CD8-positive, alpha-beta T cell (primary cell): ENCODE measurements at regions of chrX and their contacts with region 1.

Region 1: DNA sequence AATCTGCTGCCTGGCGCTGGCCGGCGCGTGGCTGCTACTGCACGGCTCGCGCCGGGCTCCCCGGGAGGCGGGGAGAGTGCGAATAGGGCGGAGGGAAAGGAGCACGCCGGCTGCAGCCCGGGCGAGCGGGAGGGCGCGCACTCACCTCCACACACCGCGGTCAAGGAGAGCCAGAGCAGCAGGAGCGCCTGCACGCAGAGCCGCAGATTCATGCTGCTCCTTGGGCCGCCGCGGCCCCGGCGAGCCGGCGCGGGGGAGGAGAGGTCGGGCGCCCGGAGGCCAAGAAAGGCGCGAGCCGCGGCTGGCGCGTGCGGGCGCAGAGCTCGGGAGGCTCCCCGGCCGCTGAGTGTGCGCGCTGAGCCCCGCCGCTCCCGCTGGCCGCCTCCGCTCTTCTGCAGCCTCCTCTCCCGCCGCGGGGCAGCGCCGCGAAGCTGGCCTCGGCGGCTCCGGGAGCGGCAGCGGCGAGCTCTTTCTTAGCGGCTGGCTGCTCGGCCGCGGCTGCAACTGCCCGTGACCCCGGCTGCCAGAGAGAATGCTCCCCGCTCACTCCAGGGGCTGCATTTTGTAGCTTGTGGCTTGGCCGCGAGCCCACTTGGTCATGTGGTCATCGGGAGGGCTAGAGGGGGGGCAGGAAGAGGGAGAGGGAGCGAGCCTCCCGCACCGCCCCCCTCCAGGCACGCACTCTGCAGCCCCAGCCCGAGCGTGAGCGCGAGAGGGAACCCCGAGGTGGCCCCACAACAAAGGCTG is at the start of gene APLN:
- DNase-seq: peak in 2 of 9 experiments; percentile 29 to 33
- ATAC-seq: peak; percentile 52
- H3K4me3 ChIP-seq: peak within 1 kb of the TSS; percentile 15 to 26
- H3K4me3 Mint-ChIP-seq: peak within 1 kb of the TSS; percentile 68
- H3K27ac ChIP-seq: no peak within 1 kb of the TSS
- H3K27ac Mint-ChIP-seq: no peak within 1 kb of the TSS
- H3K4me1 ChIP-seq: peaks cover 10% of the 10 kb centered on the region
- H3K4me1 Mint-ChIP-seq: peaks cover 7% of the 10 kb centered on the region
- H3K27me3 ChIP-seq: peaks cover 0 to 3% of the 10 kb centered on the region in 2 experiments
- H3K27me3 Mint-ChIP-seq: peaks cover 12% of the 10 kb centered on the region
- CTCF ChIP-seq: no peak
- total RNA-seq, gene APLN: not detected

Region 2: GRCh38 chrX:129695535-129695934 is 40.9 kb after region 1 on chrX:
- CTCF ChIA-PET with region 1: no interaction called
- POLR2A ChIA-PET with region 1: no interaction called
- intact Hi-C with region 1: no loop called
- DNase-seq: no peak
- ATAC-seq: no peak
- H3K4me3 ChIP-seq: no peak overlapping the region
- H3K4me3 Mint-ChIP-seq: no peak overlapping the region
- H3K27ac ChIP-seq: no peak overlapping the region
- H3K27ac Mint-ChIP-seq: no peak overlapping the region
- H3K4me1 ChIP-seq: no peaks in the 10 kb centered on the region
- H3K4me1 Mint-ChIP-seq: no peaks in the 10 kb centered on the region
- H3K27me3 ChIP-seq: no peaks in the 10 kb centered on the region
- H3K27me3 Mint-ChIP-seq: no peaks in the 10 kb centered on the region
- CTCF ChIP-seq: no peak

Region 3: GRCh38 chrX:129726307-129727111 is 71.9 kb after region 1 on chrX:
- CTCF ChIA-PET with region 1: interaction called, 3 read pairs
- POLR2A ChIA-PET with region 1: no interaction called
- intact Hi-C with region 1: loop called in 1 of 2 experiments (anchors 1 kb)
- DNase-seq: peak in 5 of 9 experiments; percentile 8 to 52 (median 42)
- ATAC-seq: no peak
- H3K4me3 ChIP-seq: no peak overlapping the region
- H3K4me3 Mint-ChIP-seq: no peak overlapping the region
- H3K27ac ChIP-seq: no peak overlapping the region
- H3K27ac Mint-ChIP-seq: no peak overlapping the region
- H3K4me1 ChIP-seq: no peaks in the 10 kb centered on the region
- H3K4me1 Mint-ChIP-seq: peaks cover 43% of the 10 kb centered on the region
- H3K27me3 ChIP-seq: no peaks in the 10 kb centered on the region
- H3K27me3 Mint-ChIP-seq: no peaks in the 10 kb centered on the region
- CTCF ChIP-seq: peak; percentile 39